ENCODE measurements at regions of chr2 and their contacts with region 1.

Region 1: DNA sequence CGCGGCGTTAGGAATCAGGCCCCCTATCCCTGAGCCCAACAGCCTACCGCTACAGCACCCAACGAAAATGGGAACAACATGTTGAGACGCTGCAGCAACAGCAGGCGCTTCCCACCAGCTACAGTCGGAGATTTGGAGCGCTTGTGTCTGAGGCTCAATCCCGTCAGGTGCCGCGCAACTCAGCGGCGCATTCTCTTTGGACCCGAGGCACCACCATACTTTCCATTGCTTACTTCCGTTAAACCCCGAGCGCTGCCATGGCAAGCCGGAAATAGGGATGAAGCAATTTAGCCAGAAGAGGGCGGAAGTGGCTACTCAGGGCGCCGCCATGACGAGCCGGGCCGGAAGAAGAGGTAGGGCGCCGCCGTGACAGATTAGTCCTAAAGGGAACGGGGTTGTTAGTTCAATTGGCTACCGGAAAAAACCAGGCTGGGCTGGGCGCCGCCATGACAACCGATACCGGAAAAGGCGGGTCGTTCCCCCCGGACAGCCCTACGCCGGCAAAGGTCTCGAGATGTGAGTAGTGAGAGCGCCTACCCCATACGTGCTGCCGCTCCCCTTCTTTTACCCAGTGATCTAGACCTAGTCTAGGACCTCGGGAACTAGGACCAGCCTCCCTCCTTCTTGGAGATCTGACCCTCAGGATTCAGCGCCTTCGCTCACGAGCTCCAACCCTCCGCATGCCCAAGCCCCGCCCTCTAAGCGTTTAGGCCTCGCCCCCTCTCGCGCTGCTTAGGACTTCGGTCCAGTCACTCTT is at the start of gene CHCHD5:
- DNase-seq: peak; percentile 84
- ATAC-seq: peak; percentile 85
- H3K4me3 Mint-ChIP-seq: peak within 1 kb of the TSS; percentile 96
- H3K27ac Mint-ChIP-seq: peak within 1 kb of the TSS; percentile 96
- H3K4me1 Mint-ChIP-seq: peaks cover 35% of the 10 kb centered on the region
- H3K27me3 Mint-ChIP-seq: no peaks in the 10 kb centered on the region
- CTCF ChIP-seq: no peak
- total RNA-seq, gene CHCHD5: 26.0 and 28.4 TPM in 2 replicates

Region 2: DNA sequence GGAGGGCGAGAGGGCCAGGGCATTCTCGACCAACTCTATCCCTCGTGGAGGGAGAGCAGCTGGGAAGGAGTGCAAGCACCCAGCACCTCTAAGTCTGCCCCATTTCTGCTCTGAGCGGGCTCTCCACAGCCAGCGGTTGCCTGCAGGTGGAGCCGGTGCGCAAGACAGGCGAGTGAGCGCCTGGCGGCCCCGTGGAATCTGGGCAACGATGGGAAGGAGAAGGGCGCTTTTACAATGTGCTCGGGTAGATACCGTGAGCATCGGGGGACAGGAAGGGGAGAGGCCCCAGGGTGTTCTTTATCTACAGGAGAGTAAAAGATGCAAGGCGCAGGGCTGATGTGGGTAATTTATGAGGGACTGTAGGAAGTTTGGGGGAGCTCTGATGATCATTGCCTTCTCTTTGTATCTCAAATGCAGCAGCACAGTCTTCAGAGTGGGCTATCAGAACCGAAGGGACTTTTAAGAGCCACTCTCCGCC is 103.2 kb before region 1 on chr2:
- CTCF ChIA-PET with region 1: interaction called, 6 read pairs
- POLR2A ChIA-PET with region 1: interaction called, 5 read pairs
- intact Hi-C with region 1: loop called (anchors 1 kb)
- DNase-seq: peak; percentile 71
- ATAC-seq: peak; percentile 73
- H3K4me3 Mint-ChIP-seq: peak overlapping the region; percentile 98
- H3K27ac Mint-ChIP-seq: peak overlapping the region; percentile 97
- H3K4me1 Mint-ChIP-seq: peaks cover 22% of the 10 kb centered on the region
- H3K27me3 Mint-ChIP-seq: no peaks in the 10 kb centered on the region
- CTCF ChIP-seq: no peak

Region 3: DNA sequence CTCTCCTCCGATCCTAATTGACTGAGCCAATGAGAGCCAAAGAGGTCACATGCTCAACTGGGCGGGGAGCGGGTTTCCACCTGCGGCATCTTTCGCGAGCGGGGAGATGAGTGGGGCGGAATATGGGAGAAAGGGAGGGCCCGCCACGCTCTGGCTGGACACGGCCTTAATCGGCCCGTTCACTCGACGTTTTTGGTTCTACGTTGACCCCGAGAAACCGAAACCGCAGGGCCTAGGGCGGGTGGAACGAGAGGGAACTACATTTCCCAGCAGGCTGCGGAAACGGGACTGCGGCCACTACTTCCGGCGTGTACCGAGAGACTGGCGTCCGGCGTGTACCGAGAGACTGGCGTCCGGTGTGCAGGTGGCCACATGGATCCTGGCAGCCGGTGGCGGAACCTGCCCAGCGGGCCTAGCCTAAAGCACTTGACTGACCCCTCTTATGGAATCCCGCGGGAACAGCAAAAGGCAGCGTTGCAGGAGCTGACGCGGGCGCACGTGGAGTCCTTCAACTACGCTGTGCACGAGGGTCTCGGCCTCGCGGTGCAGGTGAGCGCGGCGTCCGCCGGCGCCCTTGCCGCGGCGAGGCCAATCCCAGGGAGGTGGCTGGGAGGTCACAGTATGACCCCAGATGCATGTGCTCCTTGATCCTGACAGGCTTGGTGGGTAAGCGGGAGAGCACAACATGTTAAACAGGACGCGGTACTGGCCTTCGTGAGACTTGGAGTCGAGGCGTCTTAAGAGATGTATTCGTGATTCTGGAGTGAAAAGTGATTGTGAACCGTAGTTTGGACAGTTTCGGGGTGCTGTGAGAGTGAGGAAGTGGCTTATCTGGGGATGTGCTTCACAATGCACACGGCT is 42.0 kb before region 1 on chr2 and contains the start of gene POLR1B:
- CTCF ChIA-PET with region 1: no interaction called
- POLR2A ChIA-PET with region 1: interaction called, 15 read pairs
- intact Hi-C with region 1: loop called (anchors 1 kb)
- DNase-seq: peak; percentile 72
- ATAC-seq: peak; percentile 77
- H3K4me3 Mint-ChIP-seq: no peak within 1 kb of the TSS
- H3K27ac Mint-ChIP-seq: no peak within 1 kb of the TSS
- H3K4me1 Mint-ChIP-seq: peaks cover 19% of the 10 kb centered on the region
- H3K27me3 Mint-ChIP-seq: no peaks in the 10 kb centered on the region
- CTCF ChIP-seq: no peak
- total RNA-seq, gene POLR1B: 43.1 and 48.8 TPM in 2 replicates

Region 4: GRCh38 chr2:112706170-112706664 is 121.9 kb after region 1 on chr2:
- CTCF ChIA-PET with region 1: no interaction called
- POLR2A ChIA-PET with region 1: interaction called, 3 read pairs
- intact Hi-C with region 1: loop called (anchors 5 kb)
- DNase-seq: no peak
- ATAC-seq: peak; percentile 56
- H3K4me3 Mint-ChIP-seq: peak overlapping the region; percentile 58
- H3K27ac Mint-ChIP-seq: peak overlapping the region; percentile 85
- H3K4me1 Mint-ChIP-seq: peaks cover 85% of the 10 kb centered on the region
- H3K27me3 Mint-ChIP-seq: no peaks in the 10 kb centered on the region
- CTCF ChIP-seq: no peak

Measured in activated B cell treated with CpG ODN at 0.5 μM for 24 hours (primary cell).